Posterior vena cava (tissue), 2 donors: ENCODE measurements at regions of chr5 and their contacts with region 1.

Region 1: DNA sequence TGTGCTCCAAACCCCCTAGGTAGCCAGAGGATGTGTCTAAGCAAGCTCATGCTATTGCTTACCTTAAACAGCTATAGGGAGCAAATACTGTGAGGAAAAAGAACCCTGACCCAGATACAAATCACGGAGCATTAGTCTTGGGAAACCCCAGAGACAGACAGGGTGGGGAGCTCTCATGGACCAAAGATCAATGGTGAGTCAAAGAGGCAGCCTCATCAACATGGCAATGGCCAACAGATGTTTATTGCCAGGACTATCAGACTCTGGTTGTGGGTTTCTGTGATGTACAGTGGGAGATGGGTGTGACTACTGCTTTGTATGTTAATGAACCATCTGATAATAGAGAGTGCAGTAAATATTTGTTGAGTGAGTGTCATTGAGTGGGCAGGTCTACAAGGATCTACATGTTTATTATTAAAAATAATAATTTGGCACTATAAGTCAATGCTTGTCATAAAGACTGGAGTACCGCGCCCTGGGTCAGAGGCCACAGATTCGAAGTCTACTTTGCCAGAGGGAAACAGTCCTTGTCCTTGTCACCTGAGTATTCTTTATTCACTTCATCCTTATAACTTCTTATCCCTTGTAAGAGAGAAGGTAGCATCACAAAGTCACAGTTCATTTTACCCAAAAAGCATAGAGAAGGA is 56.5 kb upstream of the RAI14 start:
- DNase-seq: no peak

Region 2: DNA sequence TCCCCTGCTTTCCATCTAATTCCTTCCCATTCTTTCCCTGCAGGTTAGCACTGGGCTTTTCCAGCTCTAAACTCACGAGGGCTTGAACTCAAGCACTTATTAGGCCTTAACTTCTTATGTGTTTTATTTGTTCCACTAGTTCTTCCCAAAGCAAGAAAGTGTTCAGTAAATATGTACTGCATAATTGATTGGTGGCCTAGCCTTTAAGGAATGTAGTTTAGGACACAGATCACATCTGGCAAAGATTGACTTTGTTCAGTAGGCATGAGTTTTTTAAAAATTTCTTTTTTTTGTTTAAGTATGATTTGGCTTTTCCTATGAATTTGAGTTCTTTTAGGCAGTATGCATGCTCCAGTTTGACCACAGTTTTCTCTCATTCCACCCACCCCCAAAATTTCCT is 1603.3 kb before region 1 on chr5:
- intact Hi-C with region 1: no loop called
- DNase-seq: no peak

Region 3: DNA sequence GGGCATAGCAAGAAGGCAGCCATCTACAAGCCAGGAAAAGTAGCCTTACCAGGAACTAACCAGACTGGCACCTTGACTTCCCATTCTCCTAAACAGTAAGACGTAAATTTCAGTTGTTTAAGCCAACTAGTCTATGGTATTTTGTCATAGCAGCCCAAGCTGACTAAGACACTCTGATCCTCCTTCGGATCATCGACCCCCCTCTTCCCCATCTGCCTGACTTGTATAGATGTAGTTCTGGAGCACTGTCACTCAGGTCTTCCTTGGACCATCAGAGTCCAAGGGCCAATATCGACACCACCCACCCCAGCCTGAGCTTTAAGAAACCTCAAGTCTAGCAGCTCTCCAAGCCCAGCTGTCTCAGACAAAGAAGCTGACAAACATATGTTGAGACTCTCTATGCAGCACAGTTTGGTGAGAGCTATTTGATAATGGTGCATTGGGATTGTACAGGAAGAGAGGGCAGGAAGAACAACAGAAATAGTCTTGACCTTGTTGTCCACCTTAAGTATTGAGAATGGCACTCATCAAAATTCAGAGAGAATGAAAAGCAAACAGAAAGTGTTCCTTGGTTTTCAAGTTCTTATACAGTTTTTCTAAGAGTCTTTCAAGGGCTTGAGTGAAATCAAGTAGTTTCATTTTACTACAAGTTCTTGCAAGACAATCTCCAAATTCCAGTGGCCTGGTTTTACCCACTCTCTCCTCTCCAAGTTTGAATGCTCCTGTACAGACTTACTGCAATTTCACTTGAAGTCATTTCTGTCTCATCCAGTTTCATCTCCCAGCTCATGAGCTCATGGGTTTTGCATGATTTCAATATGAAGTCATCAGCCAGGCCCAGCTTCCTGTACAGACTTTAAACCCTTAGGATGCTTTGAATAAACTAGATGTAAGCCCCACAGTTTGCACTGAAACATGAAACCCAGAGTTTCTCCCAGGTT is 65.7 kb before region 1 on chr5:
- intact Hi-C with region 1: loop called in 1 of 2 experiments (anchors 5 kb)
- DNase-seq: no peak

Region 4: DNA sequence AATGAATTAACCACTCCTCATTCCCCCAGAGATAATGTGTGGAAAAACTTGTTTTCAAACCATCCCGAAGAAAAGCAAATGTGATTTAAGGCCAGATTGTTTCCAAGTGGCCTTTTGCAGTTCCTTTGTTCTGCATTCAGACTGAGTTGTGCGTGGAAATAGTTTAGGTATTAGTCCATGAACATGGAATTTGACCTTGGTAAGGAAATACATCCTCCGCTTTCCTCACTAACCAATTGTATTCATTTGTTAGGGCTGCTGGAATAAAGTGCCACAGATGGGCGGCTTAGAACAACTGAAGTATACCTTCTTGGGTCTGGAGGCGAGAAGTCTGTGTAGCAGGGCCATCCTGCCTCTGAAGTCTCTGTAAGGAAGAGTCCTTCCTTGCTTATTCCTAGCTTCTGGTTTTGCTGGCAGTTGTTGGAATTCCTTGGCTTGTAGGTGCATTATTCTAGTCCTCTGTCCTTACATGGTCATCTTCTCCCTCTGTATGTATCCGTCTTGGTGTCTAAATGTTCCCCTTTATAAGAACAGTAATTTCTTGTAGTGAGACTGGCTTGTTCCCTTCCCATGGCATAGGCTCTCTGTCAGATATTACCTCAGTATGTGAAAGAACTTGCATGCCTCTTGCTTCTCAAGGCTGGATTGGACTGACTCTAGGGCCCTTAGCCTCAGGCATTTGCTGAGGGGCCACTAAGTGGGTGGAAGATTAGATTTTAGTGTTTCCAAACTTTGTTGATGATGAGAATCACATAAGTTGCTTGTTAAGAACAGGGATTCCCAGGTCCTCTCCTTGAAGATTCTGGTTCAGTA is 110.5 kb after region 1 on chr5:
- intact Hi-C with region 1: no loop called
- DNase-seq: no peak

Region 5: DNA sequence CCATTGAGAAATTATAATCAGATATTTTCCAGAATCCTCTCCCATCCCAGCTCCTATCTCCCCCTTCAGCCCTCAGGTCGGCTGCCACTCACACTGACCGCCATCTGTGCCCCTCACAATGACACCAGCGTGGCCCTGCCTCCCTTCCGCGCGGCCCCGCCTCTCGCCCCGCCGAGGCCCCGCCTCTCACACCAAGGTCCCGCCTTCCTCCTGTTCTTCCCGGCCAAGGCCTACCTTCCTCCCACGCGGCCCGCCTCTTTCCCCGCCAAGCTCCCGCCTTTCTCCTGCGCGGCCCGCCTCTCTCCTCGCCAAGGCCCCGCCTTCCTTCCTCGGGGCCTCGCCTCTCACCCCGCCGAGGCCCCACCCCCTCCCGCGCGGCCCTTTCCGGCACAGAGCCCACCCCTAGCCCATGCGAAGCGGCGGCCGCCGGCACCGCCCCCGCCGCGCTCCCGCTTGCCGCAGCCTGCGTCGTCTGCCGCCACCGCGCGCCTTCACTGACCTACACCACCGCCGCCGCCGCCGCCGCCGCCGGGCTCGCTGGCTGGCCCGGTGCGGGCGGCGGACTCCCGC is 329.6 kb after region 1 on chr5 and contains the start of gene DNAJC21:
- intact Hi-C with region 1: no loop called
- DNase-seq: peak; percentile 99
- total RNA-seq, gene DNAJC21: 49.3 to 59.0 TPM